Activated naive CD4-positive, alpha-beta T cell treated with anti-CD3 and anti-CD28 coated beads for 36 hours (primary cell): ENCODE measurements at regions of chr4 and their contacts with region 1.

Region 1: DNA sequence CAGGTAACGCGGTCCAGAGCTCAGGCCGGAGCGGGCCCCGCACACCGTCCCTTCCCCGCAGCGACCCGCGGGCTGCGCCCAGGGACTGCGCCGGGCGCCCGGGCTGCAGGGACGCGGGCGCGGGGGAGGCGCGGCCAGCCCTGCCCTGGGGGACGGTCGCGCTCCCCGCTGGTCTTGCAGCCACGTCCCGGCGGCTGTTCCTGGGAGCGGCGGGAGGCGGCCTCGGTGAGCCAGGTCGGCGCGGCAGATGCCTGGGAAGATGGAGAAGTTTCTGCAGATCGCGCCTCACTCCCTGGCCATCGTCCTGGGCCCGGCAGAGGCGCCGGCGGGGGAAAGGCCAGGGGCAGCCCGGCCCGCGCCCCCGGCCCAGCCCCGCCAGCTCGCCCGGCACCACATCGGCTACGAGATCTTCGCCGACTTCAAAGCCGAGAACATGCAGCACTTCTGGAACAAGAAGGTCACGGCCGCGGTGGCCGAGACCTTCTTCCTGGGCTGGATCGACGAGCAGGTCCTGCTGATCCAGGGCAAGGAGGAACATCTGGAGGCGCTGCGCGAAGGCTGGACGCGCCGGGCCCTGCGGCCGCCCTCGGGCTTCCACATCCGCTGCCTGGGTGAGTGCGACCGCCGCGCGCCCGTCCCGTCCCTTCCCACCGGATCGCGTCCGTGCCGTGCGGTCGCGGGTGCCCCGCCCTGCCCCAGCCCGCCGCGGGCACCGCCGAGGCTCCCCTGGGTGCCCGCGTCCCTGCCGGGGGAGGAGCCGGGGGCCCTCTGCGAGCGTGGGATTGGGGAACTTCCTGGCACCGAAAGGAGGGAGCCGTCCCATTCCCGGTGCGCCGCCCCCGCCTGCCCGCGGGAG is 107.4 kb upstream of the STOX2 start:
- DNase-seq: peak; percentile 32
- H3K4me3 Mint-ChIP-seq: peak overlapping the region; percentile 41
- H3K27ac Mint-ChIP-seq: no peak overlapping the region
- H3K4me1 Mint-ChIP-seq: peaks cover 9% of the 10 kb centered on the region
- H3K27me3 Mint-ChIP-seq: peaks cover 59% of the 10 kb centered on the region

Region 2: GRCh38 chr4:183618681-183619080 is 179.0 kb before region 1 on chr4:
- CTCF ChIA-PET with region 1: no interaction called
- intact Hi-C with region 1: loop called (anchors 2 kb)
- DNase-seq: no peak
- H3K4me3 Mint-ChIP-seq: no peak overlapping the region
- H3K27ac Mint-ChIP-seq: no peak overlapping the region
- H3K4me1 Mint-ChIP-seq: no peaks in the 10 kb centered on the region
- H3K27me3 Mint-ChIP-seq: peaks cover 2% of the 10 kb centered on the region

Region 3: GRCh38 chr4:183722731-183723560 is 74.7 kb before region 1 on chr4:
- CTCF ChIA-PET with region 1: no interaction called
- intact Hi-C with region 1: loop called (anchors 1 kb)
- DNase-seq: peak; percentile 53
- H3K4me3 Mint-ChIP-seq: peak overlapping the region; percentile 72
- H3K27ac Mint-ChIP-seq: no peak overlapping the region
- H3K4me1 Mint-ChIP-seq: peaks cover 9% of the 10 kb centered on the region
- H3K27me3 Mint-ChIP-seq: peaks cover 12% of the 10 kb centered on the region

Region 4: DNA sequence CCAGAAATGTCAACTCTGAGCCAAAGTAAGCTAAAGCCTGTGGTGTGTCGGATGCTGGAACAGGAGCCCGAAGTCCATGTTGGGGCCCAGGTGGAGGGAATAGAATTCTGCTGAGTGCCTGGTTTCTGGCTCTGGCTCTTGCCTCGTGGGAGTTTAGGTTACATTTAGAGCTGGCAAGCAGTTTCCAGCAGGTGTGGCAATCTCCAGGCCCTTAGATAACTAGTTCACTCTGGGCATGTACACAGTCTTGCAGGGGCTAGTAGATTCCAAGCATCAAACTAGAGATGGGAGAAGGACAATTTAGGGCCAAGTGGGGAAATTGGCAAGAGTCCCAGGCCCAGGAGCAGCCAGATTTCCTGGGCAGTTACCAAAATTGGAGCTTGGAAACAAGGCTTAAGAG is 51.1 kb after region 1 on chr4:
- CTCF ChIA-PET with region 1: no interaction called
- intact Hi-C with region 1: no loop called
- DNase-seq: no peak
- H3K4me3 Mint-ChIP-seq: no peak overlapping the region
- H3K27ac Mint-ChIP-seq: no peak overlapping the region
- H3K4me1 Mint-ChIP-seq: no peaks in the 10 kb centered on the region
- H3K27me3 Mint-ChIP-seq: peaks cover 24% of the 10 kb centered on the region